IMR-90 (cell line): ENCODE measurements at regions of chr18 and their contacts with region 1.

Region 1: DNA sequence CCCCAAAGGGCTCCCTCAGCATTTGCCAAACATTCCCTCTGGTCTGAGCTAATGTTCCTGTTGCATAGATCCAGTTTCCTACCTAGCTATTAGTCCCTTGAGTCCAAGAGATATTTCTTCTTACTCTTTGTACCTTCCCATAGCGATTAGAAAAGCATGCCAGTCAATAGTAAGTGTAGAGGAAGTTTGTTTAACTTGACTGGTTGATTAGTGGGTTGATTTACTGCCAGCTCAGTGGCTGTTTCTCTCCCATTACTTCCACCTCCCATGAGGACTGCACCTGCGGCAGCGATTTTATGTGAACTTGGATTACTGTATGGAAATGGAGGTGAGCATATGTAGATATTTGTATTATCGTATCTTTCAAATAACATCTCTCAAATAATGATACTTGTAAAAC is 1748.4 kb upstream of the CELF4 start:
- DNase-seq: no peak
- ATAC-seq: no peak
- H3K4me3 ChIP-seq: no peak overlapping the region
- H3K27ac ChIP-seq: no peak overlapping the region
- H3K4me1 ChIP-seq: no peaks in the 10 kb centered on the region
- H3K27me3 ChIP-seq: no peaks in the 10 kb centered on the region
- CTCF ChIP-seq: no peak
- POLR2A ChIP-seq: no peak
- RAD21 ChIP-seq: no peak

Region 2: DNA sequence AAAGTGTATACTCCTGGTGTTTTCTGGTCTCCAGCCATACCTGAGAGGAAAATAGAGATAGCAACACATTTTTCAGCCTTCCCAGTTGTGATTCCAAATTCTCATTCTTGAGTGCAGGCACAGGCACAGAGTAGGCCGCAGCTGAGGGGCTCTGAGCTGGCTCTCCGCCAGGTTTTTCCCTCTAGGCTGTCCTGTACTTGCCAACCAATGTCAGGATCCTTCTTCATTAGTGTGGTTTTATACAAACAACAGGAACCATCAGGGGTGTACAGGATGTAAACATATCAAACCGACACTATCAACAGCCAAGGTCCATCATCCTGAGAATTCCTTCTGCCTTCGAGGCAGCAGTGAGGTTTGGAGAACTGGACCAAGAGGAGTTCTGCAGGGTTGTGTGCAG is 14.8 kb before region 1 on chr18:
- CTCF ChIA-PET with region 1: no interaction called
- POLR2A ChIA-PET with region 1: no interaction called
- dilution Hi-C with region 1: no loop called
- in situ Hi-C with region 1: no loop called
- intact Hi-C with region 1: loop called (anchors 1 kb)
- DNase-seq: no peak
- ATAC-seq: no peak
- H3K4me3 ChIP-seq: no peak overlapping the region
- H3K27ac ChIP-seq: no peak overlapping the region
- H3K4me1 ChIP-seq: no peaks in the 10 kb centered on the region
- H3K27me3 ChIP-seq: no peaks in the 10 kb centered on the region
- CTCF ChIP-seq: no peak
- POLR2A ChIP-seq: no peak
- RAD21 ChIP-seq: no peak